Activated CD4-positive, alpha-beta T cell treated with anti-CD3 and anti-CD28 coated beads, Interleukin-2, amount 10 ng/mL, durations not matched to agents 24 days and 14 days (primary cell): ENCODE measurements at regions of chr3 and their contacts with region 1.

Region 1: GRCh38 chr3:140898340-140899180 is 43.1 kb upstream of the SLC25A36 start:
- DNase-seq: peak; percentile 77
- H3K4me3 Mint-ChIP-seq: no peak overlapping the region
- H3K27ac Mint-ChIP-seq: no peak overlapping the region
- H3K4me1 Mint-ChIP-seq: peaks cover 3% of the 10 kb centered on the region
- H3K27me3 Mint-ChIP-seq: peaks cover 21% of the 10 kb centered on the region

Region 2: GRCh38 chr3:140972833-140973232 is 74.3 kb after region 1 on chr3:
- intact Hi-C with region 1: loop called (anchors 2 kb)
- DNase-seq: no peak
- H3K4me3 Mint-ChIP-seq: no peak overlapping the region
- H3K27ac Mint-ChIP-seq: no peak overlapping the region
- H3K4me1 Mint-ChIP-seq: peaks cover 7% of the 10 kb centered on the region
- H3K27me3 Mint-ChIP-seq: no peaks in the 10 kb centered on the region